Activated CD4-positive, alpha-beta T cell treated with anti-CD3 and anti-CD28 coated beads for 36 hours (primary cell): ENCODE measurements at regions of chr1 and their contacts with region 1.

Region 1: DNA sequence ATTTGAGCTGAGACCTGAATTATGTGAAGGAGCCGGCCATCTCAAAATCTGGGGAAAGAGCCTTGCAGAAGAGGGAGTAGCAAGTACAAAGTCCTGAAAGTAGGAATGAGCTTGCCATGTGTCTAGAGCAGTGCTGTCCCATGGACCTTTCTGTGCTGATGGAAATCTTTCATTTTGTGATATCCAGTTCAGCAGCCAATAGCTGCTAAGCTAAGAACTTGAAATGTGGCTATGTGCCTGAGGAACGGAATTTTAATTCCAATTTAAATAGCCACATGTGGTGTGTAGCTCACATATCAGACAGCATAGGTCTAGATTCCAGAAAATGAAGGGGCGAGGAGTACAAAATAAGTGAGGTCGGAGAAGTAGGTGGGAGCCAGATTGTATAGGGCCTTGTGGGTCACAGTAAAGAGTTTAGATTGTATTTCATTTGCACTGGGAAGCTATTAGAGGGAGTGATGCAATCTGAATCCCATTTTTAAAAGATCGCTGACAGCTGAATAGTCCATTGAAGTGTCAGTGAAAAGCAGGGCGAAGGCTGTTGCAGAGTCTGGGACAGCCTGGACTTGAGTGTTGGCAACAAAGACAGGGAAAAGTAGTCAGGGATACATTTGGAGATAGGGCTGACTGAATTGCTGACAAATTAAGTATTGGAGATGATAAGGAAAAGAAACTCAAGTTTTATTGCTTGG is 80.3 kb downstream of the TMEM200B start:
- DNase-seq: no peak
- ATAC-seq: no peak
- H3K4me3 Mint-ChIP-seq: no peak overlapping the region
- H3K27ac Mint-ChIP-seq: peak overlapping the region; percentile 70
- H3K4me1 Mint-ChIP-seq: peaks cover 40% of the 10 kb centered on the region
- H3K27me3 Mint-ChIP-seq: no peaks in the 10 kb centered on the region

Region 2: GRCh38 chr1:28613175-28613574 is 430.2 kb before region 1 on chr1:
- CTCF ChIA-PET with region 1: no interaction called
- POLR2A ChIA-PET with region 1: no interaction called
- intact Hi-C with region 1: no loop called
- DNase-seq: no peak
- ATAC-seq: no peak
- H3K4me3 Mint-ChIP-seq: no peak overlapping the region
- H3K27ac Mint-ChIP-seq: no peak overlapping the region
- H3K4me1 Mint-ChIP-seq: no peaks in the 10 kb centered on the region
- H3K27me3 Mint-ChIP-seq: no peaks in the 10 kb centered on the region

Region 3: DNA sequence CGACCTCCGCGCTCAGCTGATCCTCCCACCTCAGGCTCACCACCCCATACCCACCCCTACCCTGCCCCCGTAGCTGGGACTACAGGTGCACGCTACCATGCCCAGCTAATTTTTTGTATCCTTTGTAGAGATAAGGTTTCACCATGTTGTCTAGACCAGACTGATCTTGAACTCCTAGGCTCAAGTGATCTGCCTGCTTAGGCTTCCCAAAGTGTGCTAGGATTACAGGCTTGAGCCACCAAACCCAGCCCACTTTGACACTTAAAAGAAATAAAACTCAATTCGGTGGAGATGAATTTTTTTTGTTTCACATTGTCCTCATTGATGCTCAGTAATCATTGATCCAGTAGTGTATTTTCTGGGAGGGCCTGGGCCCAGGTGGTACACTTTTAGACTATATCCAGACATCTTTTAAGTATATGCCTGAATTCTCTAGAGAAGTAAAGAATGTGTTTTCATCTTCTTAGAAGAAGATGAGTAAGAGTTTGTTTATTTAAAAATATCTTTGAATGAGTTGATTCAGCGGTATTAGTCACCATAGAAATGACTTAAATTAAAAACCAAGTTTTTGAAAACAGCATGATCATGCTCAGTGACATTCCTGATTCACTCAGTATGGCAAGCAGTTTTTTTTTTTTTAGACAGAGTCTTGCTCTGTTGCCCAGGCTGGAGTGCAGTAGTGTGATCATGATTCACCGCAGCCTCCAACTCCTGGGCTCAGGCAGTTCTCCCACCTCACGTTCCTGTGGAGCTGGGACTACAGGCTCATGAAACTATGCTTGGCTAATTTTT is 71.2 kb before region 1 on chr1:
- CTCF ChIA-PET with region 1: no interaction called
- POLR2A ChIA-PET with region 1: interaction called, 12 read pairs
- intact Hi-C with region 1: no loop called
- DNase-seq: peak; percentile 46
- ATAC-seq: peak; percentile 89
- H3K4me3 Mint-ChIP-seq: peak overlapping the region; percentile 27
- H3K27ac Mint-ChIP-seq: peak overlapping the region; percentile 81
- H3K4me1 Mint-ChIP-seq: peaks cover 61% of the 10 kb centered on the region
- H3K27me3 Mint-ChIP-seq: no peaks in the 10 kb centered on the region